ENCODE measurements at regions of chr11 and their contacts with region 1.

Region 1: GRCh38 chr11:118277306-118277705 is 13.2 kb upstream of the MPZL2 start:
- DNase-seq: peak; percentile 65 to 99
- H3K4me3 ChIP-seq: no peak overlapping the region; the same call in 1 of the 2 replicates
- H3K27ac ChIP-seq: peak overlapping the region; percentile 80
- H3K4me1 ChIP-seq: peaks cover 47% of the 10 kb centered on the region
- H3K27me3 ChIP-seq: no peaks in the 10 kb centered on the region
- CTCF ChIP-seq: no peak

Region 2: GRCh38 chr11:117919781-117920221 is 357.5 kb before region 1 on chr11:
- CTCF ChIA-PET with region 1: no interaction called
- POLR2A ChIA-PET with region 1: no interaction called
- intact Hi-C with region 1: no loop called
- DNase-seq: no peak
- H3K4me3 ChIP-seq: no peak overlapping the region
- H3K27ac ChIP-seq: no peak overlapping the region
- H3K4me1 ChIP-seq: no peaks in the 10 kb centered on the region
- H3K27me3 ChIP-seq: no peaks in the 10 kb centered on the region
- CTCF ChIP-seq: no peak

Region 3: GRCh38 chr11:118251858-118252652 is 25.3 kb before region 1 on chr11 and contains the start of gene MPZL3:
- CTCF ChIA-PET with region 1: no interaction called
- POLR2A ChIA-PET with region 1: interaction called, 3 read pairs
- intact Hi-C with region 1: loop called (anchors 1 kb)
- DNase-seq: peak; percentile 86 to 99
- H3K4me3 ChIP-seq: peak within 1 kb of the TSS; percentile 72
- H3K27ac ChIP-seq: peak within 1 kb of the TSS; percentile 88
- H3K4me1 ChIP-seq: peaks cover 32% of the 10 kb centered on the region
- H3K27me3 ChIP-seq: no peaks in the 10 kb centered on the region
- CTCF ChIP-seq: 0 out of 2 replicates have a peak, but pooled peaks have one; percentile 2
- total RNA-seq, gene MPZL3: 13.4 and 16.8 TPM in 2 replicates

Measured in PC-9 (cell line).